Colonic mucosa (tissue), 4 donors: ENCODE measurements at regions of chr5 and their contacts with region 1.

Region 1: DNA sequence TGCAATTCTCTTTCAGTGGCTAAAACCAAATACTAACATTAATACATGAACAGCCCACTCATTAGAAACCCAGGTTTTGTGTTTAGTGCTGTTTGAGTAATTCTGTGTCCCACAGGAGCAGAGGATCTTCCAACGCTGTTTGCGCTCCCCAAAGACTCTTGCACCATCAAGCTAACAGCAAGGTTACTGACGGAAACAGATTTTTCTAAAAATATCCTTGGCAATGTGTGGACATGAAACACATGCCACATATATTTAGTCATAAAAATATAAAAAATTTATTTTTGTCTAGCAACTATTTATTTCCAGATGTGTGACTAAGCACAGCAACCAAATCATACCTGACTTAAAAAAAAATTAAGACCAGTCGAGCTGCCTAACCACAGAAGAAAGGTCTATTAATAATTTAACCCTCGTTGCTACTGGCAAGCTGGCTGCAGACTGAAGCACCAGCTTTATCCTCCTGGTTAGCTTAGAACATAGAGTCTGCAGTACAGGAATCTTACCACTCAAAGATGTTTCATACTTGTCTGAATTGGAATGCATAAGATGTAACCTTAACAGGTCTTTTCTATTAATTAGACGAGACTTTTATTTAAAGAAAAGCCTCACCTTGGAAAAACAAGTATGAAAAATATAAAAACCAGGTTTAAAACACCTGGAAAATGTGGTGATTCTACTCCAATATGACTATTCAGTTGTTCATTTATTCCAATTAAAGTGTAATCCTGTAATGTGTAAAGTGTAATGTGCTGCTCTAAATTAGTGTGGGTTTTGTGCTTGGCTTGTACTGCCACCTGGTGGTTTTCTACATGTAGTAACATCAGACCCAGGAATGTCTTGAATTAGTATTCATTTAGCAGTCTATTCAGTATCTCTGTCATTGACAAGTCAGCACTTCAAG is 272.5 kb downstream of the EPB41L4A start:
- DNase-seq: peak; percentile 65
- H3K4me3 ChIP-seq: no peak overlapping the region
- H3K27ac ChIP-seq: no peak overlapping the region
- H3K4me1 ChIP-seq: no peaks in the 10 kb centered on the region
- H3K27me3 ChIP-seq: no peaks in the 10 kb centered on the region
- CTCF ChIP-seq: peak; percentile 71

Region 2: DNA sequence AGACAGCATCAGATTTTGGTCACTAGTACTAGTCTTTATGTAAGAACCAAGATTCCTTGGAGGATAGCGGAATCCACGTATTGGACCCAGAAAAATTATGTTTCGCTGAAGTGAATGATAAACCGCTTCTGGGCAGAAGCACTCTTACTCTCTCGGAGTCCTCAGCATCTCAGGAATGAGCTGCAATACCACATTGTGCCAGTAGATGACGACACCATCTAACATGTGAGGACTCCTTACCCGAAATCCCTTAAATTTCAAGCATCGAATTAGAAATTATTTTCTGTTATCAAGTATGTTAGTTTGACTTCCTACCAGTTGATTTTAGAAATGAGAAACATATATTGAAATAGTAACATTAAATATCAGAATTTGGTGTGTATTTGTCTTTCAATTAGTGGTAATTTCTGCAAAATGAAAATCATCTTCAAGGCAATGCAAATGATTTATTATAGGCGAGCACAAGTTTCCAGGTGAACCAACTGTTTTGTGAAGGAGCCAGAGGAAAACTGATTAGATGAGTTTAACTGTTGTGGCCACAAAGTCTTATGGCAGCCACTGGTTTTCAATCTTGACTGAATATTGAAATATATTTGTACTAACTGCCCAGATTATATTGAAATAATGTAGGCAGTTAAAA is 988.4 kb before region 1 on chr5:
- intact Hi-C with region 1: loop called (anchors 5 kb)
- DNase-seq: peak; percentile 77
- H3K4me3 ChIP-seq: no peak overlapping the region
- H3K27ac ChIP-seq: no peak overlapping the region
- H3K4me1 ChIP-seq: no peaks in the 10 kb centered on the region
- H3K27me3 ChIP-seq: no peaks in the 10 kb centered on the region
- CTCF ChIP-seq: peak; percentile 99

Region 3: DNA sequence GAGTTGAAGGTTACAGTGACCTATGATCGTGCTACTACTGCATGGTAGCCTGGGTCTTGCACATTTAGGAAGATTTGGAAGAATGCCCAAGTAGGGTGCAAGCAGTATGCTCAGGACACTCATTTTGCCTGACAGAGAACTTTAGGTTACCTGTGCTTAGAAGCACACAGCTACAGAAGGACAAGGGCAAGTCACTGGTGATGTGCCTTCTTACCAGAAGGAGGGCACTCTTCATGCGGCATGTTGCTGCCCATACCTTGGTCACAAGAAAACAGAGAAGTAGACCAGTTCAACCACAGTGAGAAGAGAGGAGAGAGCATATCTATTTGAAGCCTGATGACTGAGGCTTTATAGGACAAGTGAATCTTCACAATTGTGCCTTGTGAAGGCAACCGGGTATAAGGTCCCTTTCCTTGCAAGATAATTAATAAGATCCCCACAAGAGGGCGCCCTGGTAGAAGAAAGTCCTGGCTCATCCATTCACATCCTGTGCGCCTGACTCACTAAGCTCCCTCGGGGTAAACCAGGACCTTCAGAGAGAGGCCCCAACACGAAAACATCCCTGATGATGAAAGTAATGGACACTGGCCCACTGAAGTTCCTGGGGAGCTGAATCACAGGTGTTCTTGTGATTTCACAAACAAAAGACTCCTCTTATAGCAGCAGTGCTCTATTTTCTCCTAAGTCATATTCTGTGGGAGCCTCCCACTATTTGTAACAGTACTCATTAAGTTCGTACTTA is 596.1 kb before region 1 on chr5:
- intact Hi-C with region 1: loop called (anchors 2 kb)
- DNase-seq: peak; percentile 82
- H3K4me3 ChIP-seq: no peak overlapping the region
- H3K27ac ChIP-seq: no peak overlapping the region
- H3K4me1 ChIP-seq: no peaks in the 10 kb centered on the region
- H3K27me3 ChIP-seq: no peaks in the 10 kb centered on the region
- CTCF ChIP-seq: peak; percentile 37

Region 4: DNA sequence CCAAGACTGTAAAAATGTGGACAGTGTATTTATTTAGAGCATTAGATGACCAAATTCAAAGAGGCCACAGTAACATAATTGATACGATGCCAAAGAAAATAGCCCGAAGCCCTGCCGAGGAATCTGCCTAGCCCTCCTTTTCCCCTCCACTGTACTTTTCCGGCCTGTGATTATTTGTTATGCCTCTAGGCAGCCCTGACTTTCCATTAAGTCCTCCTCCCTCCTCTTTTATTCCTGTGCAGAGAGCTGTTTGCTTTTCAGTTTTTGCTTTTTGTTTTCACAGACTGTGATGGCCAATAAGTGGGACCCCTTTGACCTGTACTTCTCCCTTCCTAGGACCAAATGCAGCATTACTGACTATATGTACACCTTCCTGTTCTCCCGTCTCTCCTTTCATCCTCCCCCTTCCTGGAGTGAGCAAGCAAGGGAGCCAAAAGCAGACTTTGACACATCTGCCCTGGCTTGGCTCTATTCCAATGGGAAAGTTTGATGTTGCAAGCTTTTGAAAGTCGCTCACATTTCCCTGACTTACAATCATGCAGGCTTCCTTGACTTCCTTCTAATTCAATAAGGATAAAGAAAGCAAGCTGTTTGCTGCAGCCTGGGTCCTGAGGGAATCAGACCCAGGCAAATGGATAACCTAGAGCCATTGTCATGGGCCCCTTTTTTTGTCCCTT is 465.7 kb before region 1 on chr5:
- intact Hi-C with region 1: loop called (anchors 10 kb)
- DNase-seq: peak; percentile 78
- H3K4me3 ChIP-seq: no peak overlapping the region
- H3K27ac ChIP-seq: peak overlapping the region; percentile 28
- H3K4me1 ChIP-seq: peaks cover 6% of the 10 kb centered on the region
- H3K27me3 ChIP-seq: no peaks in the 10 kb centered on the region
- CTCF ChIP-seq: no peak